ENCODE measurements at regions of chr11 and their contacts with region 1.

Region 1: GRCh38 chr11:111230122-111230465 is 15.4 kb upstream of the POU2AF2 start:
- DNase-seq: no peak
- H3K4me3 ChIP-seq: no peak overlapping the region
- CTCF ChIP-seq: no peak

Region 2: GRCh38 chr11:110928391-110928790 is 301.7 kb before region 1 on chr11:
- CTCF ChIA-PET with region 1: no interaction called
- POLR2A ChIA-PET with region 1: no interaction called
- DNase-seq: no peak
- H3K4me3 ChIP-seq: no peak overlapping the region
- CTCF ChIP-seq: no peak

Region 3: GRCh38 chr11:111213256-111213655 is 16.8 kb before region 1 on chr11:
- CTCF ChIA-PET with region 1: interaction called, 11 read pairs
- POLR2A ChIA-PET with region 1: no interaction called
- DNase-seq: no peak
- H3K4me3 ChIP-seq: no peak overlapping the region
- CTCF ChIP-seq: no peak

Region 4: GRCh38 chr11:111250936-111251335 is 20.8 kb after region 1 on chr11:
- CTCF ChIA-PET with region 1: no interaction called
- POLR2A ChIA-PET with region 1: no interaction called
- DNase-seq: no peak
- H3K4me3 ChIP-seq: no peak overlapping the region
- CTCF ChIP-seq: no peak

Measured in AG04449 (cell line).